CD14-positive monocyte (primary cell): ENCODE measurements at regions of chr2 and their contacts with region 1.

Region 1: GRCh38 chr2:69741619-69742466 is at the start of gene ANXA4:
- DNase-seq: peak; percentile 40 to 59 (median 57)
- H3K4me3 ChIP-seq: peak within 1 kb of the TSS; percentile 80 to 93 (median 87)
- H3K4me3 Mint-ChIP-seq: peak within 1 kb of the TSS; percentile 97 to 100
- H3K27ac ChIP-seq: peak within 1 kb of the TSS; percentile 80 to 89
- H3K27ac Mint-ChIP-seq: peak within 1 kb of the TSS; percentile 86 to 97 (median 93)
- H3K4me1 ChIP-seq: peaks cover 21 to 34% of the 10 kb centered on the region in 2 donors
- H3K4me1 Mint-ChIP-seq: peaks cover 43% of the 10 kb centered on the region
- H3K27me3 ChIP-seq: no peaks in the 10 kb centered on the region
- H3K27me3 Mint-ChIP-seq: peaks cover 0 to 3% (median 3%) of the 10 kb centered on the region in 3 donors
- CTCF ChIP-seq: no peak
- polyA plus RNA-seq, gene ANXA4: 30.0 to 95.7 (median 64.7) TPM

Region 2: GRCh38 chr2:69589973-69590652 is 151.7 kb before region 1 on chr2:
- intact Hi-C with region 1: no loop called
- DNase-seq: no peak
- H3K4me3 ChIP-seq: no peak overlapping the region
- H3K4me3 Mint-ChIP-seq: no peak overlapping the region
- H3K27ac ChIP-seq: no peak overlapping the region
- H3K27ac Mint-ChIP-seq: peak overlapping the region in 1 of 7 donors; percentile 43
- H3K4me1 ChIP-seq: peaks cover 15 to 22% of the 10 kb centered on the region in 2 donors
- H3K4me1 Mint-ChIP-seq: peaks cover 44% of the 10 kb centered on the region
- H3K27me3 ChIP-seq: no peaks in the 10 kb centered on the region
- H3K27me3 Mint-ChIP-seq: no peaks in the 10 kb centered on the region
- CTCF ChIP-seq: no peak

Region 3: DNA sequence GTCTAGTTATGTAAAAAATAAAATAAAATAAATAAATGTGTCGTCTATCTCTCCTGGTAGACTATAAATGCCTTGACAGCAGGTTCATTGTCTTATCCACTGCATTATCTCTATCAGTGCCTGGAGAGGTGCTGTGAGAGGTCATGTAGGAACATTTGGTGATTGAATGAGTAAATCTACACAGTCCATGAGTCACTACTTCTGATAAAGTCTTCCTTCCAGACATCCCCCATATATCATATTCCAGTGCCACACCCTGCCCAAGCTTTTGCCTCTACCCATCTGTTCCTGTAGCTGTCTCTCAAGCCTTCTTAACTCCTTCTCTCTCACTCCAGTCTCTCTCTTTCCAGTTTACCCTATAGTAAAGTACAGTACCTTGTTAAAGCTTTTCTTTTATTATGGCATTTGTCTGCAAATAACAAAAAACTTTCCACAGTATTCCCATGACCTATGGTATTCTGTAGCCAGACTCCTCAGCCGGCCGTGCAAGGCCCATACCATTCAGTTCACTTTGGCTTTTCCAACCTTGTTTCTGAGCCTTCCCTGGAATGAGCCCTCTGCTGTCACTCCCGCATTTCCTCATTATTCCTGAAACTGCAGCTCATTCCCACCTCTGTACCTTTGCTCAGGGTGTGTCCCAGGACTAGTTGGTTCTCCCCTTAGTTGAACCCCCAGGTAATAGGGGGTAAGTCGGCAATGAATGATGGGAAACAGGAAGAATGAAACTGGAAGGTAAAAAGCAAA is 37.6 kb after region 1 on chr2:
- intact Hi-C with region 1: loop called in 1 of 2 experiments (anchors 5 kb)
- DNase-seq: no peak
- H3K4me3 ChIP-seq: no peak overlapping the region
- H3K4me3 Mint-ChIP-seq: no peak overlapping the region
- H3K27ac ChIP-seq: no peak overlapping the region
- H3K27ac Mint-ChIP-seq: no peak overlapping the region
- H3K4me1 ChIP-seq: peaks cover 11% of the 10 kb centered on the region in 2 donors
- H3K4me1 Mint-ChIP-seq: peaks cover 39% of the 10 kb centered on the region
- H3K27me3 ChIP-seq: no peaks in the 10 kb centered on the region
- H3K27me3 Mint-ChIP-seq: peaks cover 0 to 2% (median 2%) of the 10 kb centered on the region in 3 donors
- CTCF ChIP-seq: no peak

Region 4: DNA sequence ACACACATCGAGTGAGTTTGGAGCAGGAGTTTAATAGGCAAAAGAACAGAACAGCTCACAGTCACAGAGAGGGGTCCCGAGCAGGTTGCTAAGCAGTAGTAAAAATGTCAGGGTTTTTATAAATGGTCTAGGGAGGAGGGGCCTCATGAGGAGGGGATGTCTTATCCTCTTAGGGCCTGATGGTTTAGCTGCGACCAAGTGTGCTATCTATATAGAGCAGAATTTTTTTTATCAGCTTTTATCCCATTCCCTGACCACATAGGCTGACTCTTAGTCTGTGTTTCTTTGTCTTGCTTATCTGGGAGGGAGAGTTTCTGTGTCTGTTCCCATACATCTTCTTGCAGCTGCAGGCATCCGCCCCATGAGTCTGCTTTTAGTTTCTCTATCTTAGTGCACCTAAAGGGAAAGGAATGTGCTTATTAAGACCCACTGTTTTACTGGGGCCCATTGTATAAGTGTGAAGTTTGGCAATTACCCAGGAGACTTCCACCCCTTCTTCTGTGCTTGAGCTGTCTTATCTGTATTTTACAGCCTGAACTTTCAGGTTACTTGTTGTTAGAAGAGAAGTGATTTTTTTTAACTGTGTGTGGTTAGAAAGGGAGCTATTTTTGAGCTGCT is 57.2 kb after region 1 on chr2:
- intact Hi-C with region 1: loop called in 1 of 2 experiments (anchors 10 kb)
- DNase-seq: no peak
- H3K4me3 ChIP-seq: no peak overlapping the region
- H3K4me3 Mint-ChIP-seq: peak overlapping the region; percentile 69 to 73
- H3K27ac ChIP-seq: no peak overlapping the region
- H3K27ac Mint-ChIP-seq: peak overlapping the region in 3 of 7 donors; percentile 14 to 67 (median 33)
- H3K4me1 ChIP-seq: peaks cover 16 to 31% of the 10 kb centered on the region in 2 donors
- H3K4me1 Mint-ChIP-seq: peaks cover 44% of the 10 kb centered on the region
- H3K27me3 ChIP-seq: no peaks in the 10 kb centered on the region
- H3K27me3 Mint-ChIP-seq: peaks cover 0 to 2% (median 0%) of the 10 kb centered on the region in 3 donors
- CTCF ChIP-seq: no peak